Activated CD8-positive, alpha-beta memory T cell treated with anti-CD3 and anti-CD28 coated beads, Interleukin-2, amount 10 ng/mL, durations not matched to agents 7 days and 5 days (primary cell): ENCODE measurements at regions of chr4 and their contacts with region 1.

Region 1: GRCh38 chr4:122732329-122733026 is at the start of gene BBS12:
- DNase-seq: peak; percentile 99
- ATAC-seq: peak; percentile 98
- H3K4me3 Mint-ChIP-seq: peak within 1 kb of the TSS; percentile 91
- H3K27ac Mint-ChIP-seq: peak within 1 kb of the TSS; percentile 93
- H3K4me1 Mint-ChIP-seq: peaks cover 16% of the 10 kb centered on the region
- H3K27me3 Mint-ChIP-seq: no peaks in the 10 kb centered on the region
- total RNA-seq, gene BBS12: 2.1 to 3.6 TPM

Region 2: GRCh38 chr4:122716825-122717448 is 15.5 kb before region 1 on chr4:
- CTCF ChIA-PET with region 1: interaction called, 29 read pairs
- DNase-seq: peak; percentile 82
- ATAC-seq: peak; percentile 92
- H3K4me3 Mint-ChIP-seq: no peak overlapping the region
- H3K27ac Mint-ChIP-seq: no peak overlapping the region
- H3K4me1 Mint-ChIP-seq: peaks cover 21% of the 10 kb centered on the region
- H3K27me3 Mint-ChIP-seq: peaks cover 6% of the 10 kb centered on the region

Region 3: GRCh38 chr4:122722256-122722655 is 10.2 kb before region 1 on chr4:
- CTCF ChIA-PET with region 1: interaction called, 29 read pairs
- DNase-seq: no peak
- ATAC-seq: no peak
- H3K4me3 Mint-ChIP-seq: no peak overlapping the region
- H3K27ac Mint-ChIP-seq: no peak overlapping the region
- H3K4me1 Mint-ChIP-seq: no peaks in the 10 kb centered on the region
- H3K27me3 Mint-ChIP-seq: peaks cover 29% of the 10 kb centered on the region

Region 4: GRCh38 chr4:122930862-122931261 is 198.4 kb after region 1 on chr4:
- CTCF ChIA-PET with region 1: interaction called, 16 read pairs
- DNase-seq: no peak
- ATAC-seq: no peak
- H3K4me3 Mint-ChIP-seq: no peak overlapping the region
- H3K27ac Mint-ChIP-seq: no peak overlapping the region
- H3K4me1 Mint-ChIP-seq: peaks cover 28% of the 10 kb centered on the region
- H3K27me3 Mint-ChIP-seq: no peaks in the 10 kb centered on the region